ENCODE measurements at regions of chr1 and their contacts with region 1.

Region 1: DNA sequence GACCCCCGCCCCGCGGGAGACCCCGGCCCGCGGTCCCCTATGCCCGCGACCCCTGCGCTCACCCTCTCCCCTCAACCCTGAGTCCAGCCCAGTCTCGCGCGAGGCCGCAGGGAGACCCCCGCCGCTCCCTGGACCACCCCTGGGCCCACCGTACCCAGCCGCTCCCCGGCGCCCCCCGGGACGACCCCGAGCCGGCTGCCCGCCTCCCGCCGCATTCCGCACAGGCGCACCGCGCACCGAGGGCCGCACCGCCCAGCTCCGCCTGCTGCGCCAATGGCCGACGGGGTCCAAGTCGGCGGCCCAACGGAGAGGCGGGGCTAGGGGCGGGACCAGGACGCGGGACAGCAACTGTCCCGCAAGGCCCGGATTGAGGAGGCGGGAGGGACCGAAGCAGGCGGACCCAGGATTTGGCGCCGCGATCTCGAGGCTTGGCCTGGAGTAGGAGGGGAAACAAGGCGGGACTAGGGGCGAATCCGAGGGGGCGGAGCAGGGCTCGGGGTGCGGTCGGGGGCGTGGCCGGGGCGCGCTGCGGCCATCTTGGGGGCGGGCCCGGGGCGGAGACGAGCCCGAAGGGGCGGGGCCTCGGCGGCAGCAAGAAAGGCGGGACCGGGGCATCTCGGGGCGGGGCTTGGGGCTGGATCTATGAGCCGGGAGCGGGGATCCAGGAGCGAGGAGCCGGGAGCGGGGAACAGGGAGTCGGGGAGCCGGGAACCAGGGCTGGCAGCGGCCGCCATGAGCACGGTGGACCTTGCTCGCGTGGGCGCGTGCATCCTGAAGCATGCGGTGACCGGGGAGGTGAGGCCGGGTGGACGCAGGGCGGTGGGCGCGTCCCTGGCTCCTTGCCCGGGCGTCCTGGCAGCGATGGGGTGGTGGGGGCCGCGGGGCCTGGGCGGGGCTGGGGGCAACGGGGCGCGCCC is at the start of gene PRXL2B:
- DNase-seq: peak; percentile 90 to 100 (median 96)
- ATAC-seq: peak; percentile 86
- H3K4me3 ChIP-seq: peak within 1 kb of the TSS; percentile 78
- H3K4me3 Mint-ChIP-seq: peak within 1 kb of the TSS; percentile 81 to 96 (median 92)
- H3K27ac ChIP-seq: peak within 1 kb of the TSS; percentile 87
- H3K27ac Mint-ChIP-seq: peak within 1 kb of the TSS; percentile 87 to 99 (median 96)
- H3K4me1 ChIP-seq: peaks cover 27 to 30% of the 10 kb centered on the region in 2 donors
- H3K4me1 Mint-ChIP-seq: peaks cover 24 to 45% (median 38%) of the 10 kb centered on the region in 7 donors
- H3K27me3 ChIP-seq: no peaks in the 10 kb centered on the region
- H3K27me3 Mint-ChIP-seq: no peaks in the 10 kb centered on the region
- total RNA-seq, gene PRXL2B: 12.3 to 37.0 (median 26.7) TPM

Region 2: DNA sequence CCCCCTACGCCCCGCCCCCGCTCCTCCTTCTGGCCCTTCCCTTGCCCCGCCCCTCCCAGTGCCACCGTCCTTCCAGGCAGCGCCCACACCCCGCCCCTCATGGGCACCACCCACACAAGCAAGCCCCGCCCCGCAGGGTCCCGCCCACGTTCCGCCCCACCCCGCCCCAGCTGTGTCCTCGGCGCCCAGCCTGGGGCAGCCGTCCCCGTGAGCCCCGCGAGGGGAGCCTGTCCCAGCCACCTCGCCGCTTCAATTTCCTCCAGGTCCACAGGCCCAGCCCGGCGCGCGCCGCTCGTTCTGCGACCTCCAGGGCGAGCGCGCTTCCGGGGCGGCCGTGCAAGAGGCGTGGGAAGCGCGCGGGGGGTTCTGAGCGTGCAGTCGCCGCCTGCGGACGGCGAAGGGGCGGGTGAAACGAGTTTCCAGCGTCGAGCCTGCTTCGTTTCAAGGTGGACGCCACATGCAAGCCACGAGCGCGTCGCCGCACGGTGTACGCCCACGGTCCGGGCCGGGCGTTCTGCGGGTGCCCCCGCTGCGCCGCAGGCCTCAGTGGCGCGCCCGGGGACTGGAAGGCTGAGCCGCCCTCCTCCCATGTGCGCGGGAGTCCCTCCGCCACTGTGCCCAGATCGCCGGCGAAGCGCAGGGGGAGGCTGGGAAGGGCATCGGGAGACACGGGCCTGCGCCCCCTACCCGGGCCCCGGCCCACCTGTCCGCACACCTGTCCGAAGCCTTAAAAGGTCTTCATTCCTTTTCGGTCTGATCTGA is 381.0 kb before region 1 on chr1:
- CTCF ChIA-PET with region 1: interaction called, 4 read pairs
- POLR2A ChIA-PET with region 1: interaction called, 3 read pairs
- intact Hi-C with region 1: loop called in 1 of 2 experiments (anchors 2 kb)
- DNase-seq: peak; percentile 86 to 94 (median 93)
- ATAC-seq: peak; percentile 98
- H3K4me3 ChIP-seq: peak overlapping the region; percentile 70
- H3K4me3 Mint-ChIP-seq: peak overlapping the region; percentile 53 to 79 (median 68)
- H3K27ac ChIP-seq: peak overlapping the region; percentile 60
- H3K27ac Mint-ChIP-seq: peak overlapping the region in 5 of 9 donors; percentile 17 to 65 (median 56)
- H3K4me1 ChIP-seq: peaks cover 0 to 6% of the 10 kb centered on the region in 2 donors
- H3K4me1 Mint-ChIP-seq: peaks cover 0 to 9% (median 4%) of the 10 kb centered on the region in 7 donors
- H3K27me3 ChIP-seq: no peaks in the 10 kb centered on the region
- H3K27me3 Mint-ChIP-seq: peaks cover 0 to 4% (median 0%) of the 10 kb centered on the region in 5 donors

Region 3: GRCh38 chr1:2480986-2481364 is 105.4 kb before region 1 on chr1:
- CTCF ChIA-PET with region 1: no interaction called
- POLR2A ChIA-PET with region 1: no interaction called
- intact Hi-C with region 1: no loop called
- DNase-seq: no peak
- ATAC-seq: no peak
- H3K4me3 ChIP-seq: no peak overlapping the region
- H3K4me3 Mint-ChIP-seq: no peak overlapping the region
- H3K27ac ChIP-seq: no peak overlapping the region
- H3K27ac Mint-ChIP-seq: no peak overlapping the region
- H3K4me1 ChIP-seq: no peaks in the 10 kb centered on the region
- H3K4me1 Mint-ChIP-seq: peaks cover 0 to 4% (median 0%) of the 10 kb centered on the region in 7 donors
- H3K27me3 ChIP-seq: no peaks in the 10 kb centered on the region
- H3K27me3 Mint-ChIP-seq: no peaks in the 10 kb centered on the region

Region 4: DNA sequence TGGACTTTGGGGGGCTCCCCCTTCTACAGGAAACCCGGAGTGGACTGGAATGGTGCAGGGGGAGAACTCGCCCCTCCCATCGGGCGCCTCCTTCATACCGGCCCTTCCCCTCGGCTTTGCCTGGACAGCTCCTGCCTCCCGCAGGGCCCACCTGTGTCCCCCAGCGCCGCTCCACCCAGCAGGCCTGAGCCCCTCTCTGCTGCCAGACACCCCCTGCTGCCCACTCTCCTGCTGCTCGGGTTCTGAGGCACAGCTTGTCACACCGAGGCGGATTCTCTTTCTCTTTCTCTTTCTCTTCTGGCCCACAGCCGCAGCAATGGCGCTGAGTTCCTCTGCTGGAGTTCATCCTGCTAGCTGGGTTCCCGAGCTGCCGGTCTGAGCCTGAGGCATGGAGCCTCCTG is 30.1 kb before region 1 on chr1 and contains the start of gene TNFRSF14:
- CTCF ChIA-PET with region 1: interaction called, 28 read pairs
- POLR2A ChIA-PET with region 1: interaction called, 253 read pairs
- intact Hi-C with region 1: loop called (anchors 1 kb)
- DNase-seq: peak; percentile 47 to 82 (median 75)
- ATAC-seq: peak; percentile 76
- H3K4me3 ChIP-seq: peak within 1 kb of the TSS; percentile 83
- H3K4me3 Mint-ChIP-seq: peak within 1 kb of the TSS; percentile 89 to 100 (median 99)
- H3K27ac ChIP-seq: peak within 1 kb of the TSS; percentile 93
- H3K27ac Mint-ChIP-seq: peak within 1 kb of the TSS; percentile 89 to 99 (median 99)
- H3K4me1 ChIP-seq: peaks cover 25 to 28% of the 10 kb centered on the region in 2 donors
- H3K4me1 Mint-ChIP-seq: peaks cover 12 to 42% (median 36%) of the 10 kb centered on the region in 7 donors
- H3K27me3 ChIP-seq: no peaks in the 10 kb centered on the region
- H3K27me3 Mint-ChIP-seq: no peaks in the 10 kb centered on the region
- total RNA-seq, gene TNFRSF14: 182 to 253 (median 204) TPM

Region 5: GRCh38 chr1:2642560-2643413 is 56.4 kb after region 1 on chr1:
- CTCF ChIA-PET with region 1: interaction called, 3 read pairs
- POLR2A ChIA-PET with region 1: interaction called, 29 read pairs
- intact Hi-C with region 1: loop called (anchors 1 kb)
- DNase-seq: peak; percentile 92 to 97 (median 96)
- ATAC-seq: peak; percentile 89
- H3K4me3 ChIP-seq: peak overlapping the region; percentile 87
- H3K4me3 Mint-ChIP-seq: peak overlapping the region; percentile 85 to 96 (median 88)
- H3K27ac ChIP-seq: peak overlapping the region; percentile 97
- H3K27ac Mint-ChIP-seq: peak overlapping the region in 8 of 9 donors; percentile 76 to 93 (median 86)
- H3K4me1 ChIP-seq: peaks cover 9% of the 10 kb centered on the region in 2 donors
- H3K4me1 Mint-ChIP-seq: peaks cover 6 to 19% (median 15%) of the 10 kb centered on the region in 7 donors
- H3K27me3 ChIP-seq: no peaks in the 10 kb centered on the region
- H3K27me3 Mint-ChIP-seq: peaks cover 0 to 3% (median 0%) of the 10 kb centered on the region in 5 donors

Region 6: DNA sequence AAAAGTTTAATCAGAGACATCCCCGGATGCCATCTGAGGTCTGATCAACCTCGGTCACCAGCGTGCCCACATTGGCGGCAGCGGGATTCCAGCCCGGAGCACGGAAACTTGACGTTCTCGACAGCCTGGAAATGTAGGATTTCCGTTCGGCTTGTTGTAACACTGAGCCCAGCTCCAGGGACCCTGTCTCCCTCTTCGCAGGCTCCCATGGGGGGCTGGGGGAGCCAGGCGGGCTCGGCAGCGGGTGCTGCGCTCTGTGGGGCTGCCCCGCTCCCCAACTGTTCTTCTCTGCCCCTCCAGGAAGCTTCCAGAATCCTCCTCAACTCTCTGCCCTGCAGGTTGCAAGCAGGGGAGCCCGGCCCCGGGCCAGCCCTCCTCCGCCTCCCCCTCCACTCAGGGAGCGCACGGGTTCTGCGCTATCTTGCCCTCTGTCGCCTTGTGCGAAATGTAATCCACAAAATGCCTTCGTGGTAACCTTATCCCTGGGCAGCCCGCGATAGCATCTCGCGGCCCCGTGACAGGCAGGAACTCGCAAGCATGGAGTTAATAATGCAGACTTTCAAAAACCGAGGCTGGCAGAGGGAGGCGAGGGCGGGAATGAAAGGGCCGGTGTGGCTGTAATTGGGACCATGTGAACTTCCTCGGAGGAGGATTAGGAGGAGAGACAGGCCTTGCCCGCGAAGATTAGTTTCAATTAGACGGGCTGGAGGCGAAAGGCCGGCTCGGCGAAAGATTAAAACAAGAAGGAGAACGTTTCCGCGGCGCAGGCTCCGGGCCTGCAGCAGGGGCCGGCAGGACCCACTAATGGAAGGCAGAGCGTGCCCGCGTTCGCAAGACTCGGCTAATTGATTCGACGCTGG is 269.0 kb after region 1 on chr1:
- CTCF ChIA-PET with region 1: no interaction called
- POLR2A ChIA-PET with region 1: no interaction called
- intact Hi-C with region 1: no loop called
- DNase-seq: no peak
- ATAC-seq: no peak
- H3K4me3 ChIP-seq: no peak overlapping the region
- H3K4me3 Mint-ChIP-seq: no peak overlapping the region
- H3K27ac ChIP-seq: no peak overlapping the region
- H3K27ac Mint-ChIP-seq: no peak overlapping the region
- H3K4me1 ChIP-seq: no peaks in the 10 kb centered on the region
- H3K4me1 Mint-ChIP-seq: peaks cover 0 to 9% (median 0%) of the 10 kb centered on the region in 7 donors
- H3K27me3 ChIP-seq: no peaks in the 10 kb centered on the region
- H3K27me3 Mint-ChIP-seq: no peaks in the 10 kb centered on the region

Measured in naive thymus-derived CD4-positive, alpha-beta T cell (primary cell).